ENCODE measurements at regions of chr10 and their contacts with region 1.

Region 1: DNA sequence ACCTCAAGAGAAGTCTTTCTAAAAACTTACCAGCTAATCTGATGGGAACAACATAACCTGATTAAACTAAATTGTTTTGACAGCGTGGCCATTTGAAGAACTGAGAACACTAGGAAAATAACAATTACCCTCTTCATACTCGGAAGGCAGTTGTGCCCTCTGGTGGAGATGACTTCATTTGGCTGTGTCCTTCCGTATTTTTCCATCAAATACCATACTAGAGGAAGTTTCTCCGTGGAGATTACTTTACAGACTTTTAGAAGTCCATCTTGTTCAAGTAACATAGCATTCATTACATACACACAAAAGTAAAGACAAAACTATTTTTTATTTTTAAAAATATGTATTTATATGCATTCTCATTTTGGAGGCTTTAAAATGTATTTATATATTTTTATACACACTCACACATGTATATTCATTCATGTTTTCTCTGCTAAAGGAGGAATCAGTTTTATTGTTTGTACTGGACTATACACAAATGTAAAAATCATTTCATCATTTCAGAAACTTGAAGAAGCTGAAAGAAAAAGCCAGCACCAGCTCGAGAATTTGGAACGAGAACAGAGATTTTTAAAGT is 25.2 kb downstream of the SMNDC1 start:
- DNase-seq: peak in 1 of 2 donors; percentile 81
- ATAC-seq: peak; percentile 68 to 78 (median 72)
- H3K4me3 ChIP-seq: no peak overlapping the region
- H3K4me3 Mint-ChIP-seq: no peak overlapping the region
- H3K27ac ChIP-seq: no peak overlapping the region
- H3K27ac Mint-ChIP-seq: no peak overlapping the region
- H3K4me1 ChIP-seq: peaks cover 3% of the 10 kb centered on the region
- H3K4me1 Mint-ChIP-seq: peaks cover 7% of the 10 kb centered on the region in 2 donors
- H3K27me3 ChIP-seq: peaks cover 12% of the 10 kb centered on the region
- H3K27me3 Mint-ChIP-seq: peaks cover 21 to 42% of the 10 kb centered on the region in 2 donors
- CTCF ChIP-seq: peak; percentile 75

Region 2: DNA sequence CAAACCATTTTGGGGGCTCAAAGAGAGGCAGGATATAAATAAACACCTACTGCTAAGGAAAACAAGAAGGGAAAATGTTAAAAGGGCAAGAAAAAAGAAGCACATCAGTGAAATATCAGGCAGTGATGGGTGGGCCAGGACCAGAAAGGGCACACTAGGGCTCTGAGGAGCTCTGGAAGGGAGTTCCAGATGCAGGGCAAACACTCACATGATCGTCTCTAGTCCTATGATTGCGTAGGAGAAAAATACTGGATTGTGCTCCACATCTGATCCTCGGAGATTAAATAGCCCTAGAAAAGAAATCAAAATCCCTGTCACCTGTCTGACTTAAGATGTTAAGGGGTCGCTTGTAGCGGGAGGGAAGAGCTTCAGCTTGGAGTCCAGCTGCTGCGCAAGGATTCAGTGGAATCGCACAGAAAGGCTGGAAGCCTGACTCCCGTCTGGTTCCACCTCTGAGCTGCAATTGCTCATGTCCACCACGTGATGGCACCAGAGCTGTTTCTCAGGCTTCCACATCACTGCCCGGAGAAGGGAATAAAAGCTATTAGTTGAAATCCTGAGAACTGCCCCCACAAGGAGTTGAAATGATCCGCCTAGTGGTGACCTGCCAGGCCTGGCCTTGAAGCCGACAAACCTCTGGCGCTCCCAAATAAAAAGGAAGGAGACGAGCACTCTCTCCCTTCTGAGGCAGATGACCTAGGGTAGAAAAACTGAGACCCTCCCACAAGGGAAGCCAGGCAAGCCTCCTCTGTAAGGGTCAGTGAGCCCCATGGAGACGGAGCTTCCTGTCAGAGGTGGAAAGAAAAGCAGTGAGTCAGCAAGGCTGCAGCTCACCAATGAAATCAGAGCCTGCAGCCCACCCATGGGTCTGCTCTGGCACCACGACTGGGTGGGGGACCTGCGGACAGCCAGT is 395.4 kb before region 1 on chr10:
- intact Hi-C with region 1: loop called (anchors 2 kb)
- DNase-seq: peak; percentile 51 to 86
- ATAC-seq: peak; percentile 69 to 95 (median 93)
- H3K4me3 ChIP-seq: no peak overlapping the region
- H3K4me3 Mint-ChIP-seq: no peak overlapping the region
- H3K27ac ChIP-seq: no peak overlapping the region
- H3K27ac Mint-ChIP-seq: peak overlapping the region; percentile 20 to 62
- H3K4me1 ChIP-seq: peaks cover 8% of the 10 kb centered on the region
- H3K4me1 Mint-ChIP-seq: peaks cover 14 to 31% of the 10 kb centered on the region in 2 donors
- H3K27me3 ChIP-seq: no peaks in the 10 kb centered on the region
- H3K27me3 Mint-ChIP-seq: no peaks in the 10 kb centered on the region
- CTCF ChIP-seq: peak; percentile 93

Region 3: DNA sequence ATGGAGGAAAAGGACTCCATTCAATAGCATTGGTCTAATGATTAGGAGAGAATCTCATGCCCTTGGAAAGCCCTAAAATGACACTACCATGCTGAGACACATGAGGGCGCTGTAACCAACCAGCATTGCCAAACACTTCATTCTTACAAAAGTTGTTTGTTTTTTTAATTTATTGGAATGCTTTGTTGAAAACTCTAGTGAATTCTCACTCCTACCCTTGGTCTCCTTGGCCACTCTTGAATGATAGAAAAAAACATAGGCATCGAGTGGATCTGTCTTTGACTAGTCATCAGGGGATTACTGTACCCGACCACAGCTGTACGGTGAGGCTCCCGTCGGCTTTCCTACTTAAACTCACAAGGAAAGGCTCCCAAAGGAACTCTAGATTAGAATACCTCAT is 301.0 kb before region 1 on chr10:
- intact Hi-C with region 1: loop called (anchors 10 kb)
- DNase-seq: peak; percentile 55 to 82
- ATAC-seq: peak; percentile 70 to 78 (median 77)
- H3K4me3 ChIP-seq: no peak overlapping the region
- H3K4me3 Mint-ChIP-seq: no peak overlapping the region
- H3K27ac ChIP-seq: no peak overlapping the region
- H3K27ac Mint-ChIP-seq: no peak overlapping the region
- H3K4me1 ChIP-seq: no peaks in the 10 kb centered on the region
- H3K4me1 Mint-ChIP-seq: no peaks in the 10 kb centered on the region
- H3K27me3 ChIP-seq: no peaks in the 10 kb centered on the region
- H3K27me3 Mint-ChIP-seq: peaks cover 0 to 10% of the 10 kb centered on the region in 2 donors
- CTCF ChIP-seq: peak; percentile 80

Region 4: GRCh38 chr10:110210674-110211464 is 68.6 kb before region 1 on chr10:
- intact Hi-C with region 1: loop called (anchors 5 kb)
- DNase-seq: peak; percentile 88 to 95
- ATAC-seq: peak; percentile 73 to 81 (median 78)
- H3K4me3 ChIP-seq: peak overlapping the region; percentile 57
- H3K4me3 Mint-ChIP-seq: peak overlapping the region; percentile 96
- H3K27ac ChIP-seq: peak overlapping the region; percentile 71
- H3K27ac Mint-ChIP-seq: peak overlapping the region; percentile 63 to 86
- H3K4me1 ChIP-seq: peaks cover 48% of the 10 kb centered on the region
- H3K4me1 Mint-ChIP-seq: peaks cover 54 to 61% of the 10 kb centered on the region in 2 donors
- H3K27me3 ChIP-seq: peaks cover 30% of the 10 kb centered on the region
- H3K27me3 Mint-ChIP-seq: peaks cover 58 to 75% of the 10 kb centered on the region in 2 donors
- CTCF ChIP-seq: no peak

Region 5: GRCh38 chr10:110576220-110576619 is 296.7 kb after region 1 on chr10:
- intact Hi-C with region 1: no loop called
- DNase-seq: no peak
- ATAC-seq: no peak
- H3K4me3 ChIP-seq: no peak overlapping the region
- H3K4me3 Mint-ChIP-seq: no peak overlapping the region
- H3K27ac ChIP-seq: no peak overlapping the region
- H3K27ac Mint-ChIP-seq: no peak overlapping the region
- H3K4me1 ChIP-seq: no peaks in the 10 kb centered on the region
- H3K4me1 Mint-ChIP-seq: peaks cover 21 to 24% of the 10 kb centered on the region in 2 donors
- H3K27me3 ChIP-seq: no peaks in the 10 kb centered on the region
- H3K27me3 Mint-ChIP-seq: no peaks in the 10 kb centered on the region
- CTCF ChIP-seq: no peak

Measured in natural killer cell (primary cell).